IMR-90 (cell line): ENCODE measurements at regions of chr14 and their contacts with region 1.

Region 1: DNA sequence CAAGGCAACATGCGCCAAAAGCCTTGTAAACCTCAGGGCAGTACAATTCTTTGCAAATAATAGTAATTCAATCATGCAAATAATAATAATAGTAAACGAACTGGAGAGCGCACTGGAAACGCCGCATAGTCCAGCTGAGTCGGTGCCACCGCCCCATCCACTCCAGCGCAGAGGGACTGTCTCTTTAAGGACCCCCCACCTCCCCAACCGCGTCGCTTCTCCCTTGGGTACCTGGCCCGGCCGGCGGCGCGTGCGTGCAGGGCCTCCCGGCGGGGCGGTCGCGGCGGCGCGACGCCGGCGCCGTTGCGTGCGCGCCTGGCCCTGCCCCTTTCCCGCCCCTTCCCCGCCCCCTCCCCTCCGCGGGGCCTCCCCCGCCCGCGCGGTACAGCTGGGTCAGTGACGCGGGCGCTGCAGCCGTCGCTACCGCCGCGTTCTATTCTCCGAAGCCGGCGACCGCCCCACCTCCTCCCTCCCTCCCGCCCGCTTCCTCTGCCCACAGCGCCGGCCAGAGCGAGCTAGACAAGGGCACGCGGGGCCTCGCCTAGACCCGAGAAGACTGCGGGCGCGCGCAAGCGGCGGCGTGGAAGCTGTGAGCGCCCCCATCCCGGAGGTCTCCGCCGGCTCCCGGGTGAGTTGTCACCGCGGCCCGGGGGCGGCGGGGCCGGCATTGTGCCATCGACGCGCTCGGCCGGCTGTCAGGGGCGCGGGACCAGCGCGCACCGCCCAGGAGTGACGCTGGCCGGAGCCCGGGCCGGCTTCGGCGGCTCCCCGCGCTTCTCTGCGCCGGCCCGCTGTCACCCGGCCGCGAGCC is at the start of gene SUSD6:
- DNase-seq: peak; percentile 85
- ATAC-seq: peak; percentile 85
- H3K4me3 ChIP-seq: peak within 1 kb of the TSS; percentile 80
- H3K27ac ChIP-seq: peak within 1 kb of the TSS; percentile 85
- H3K4me1 ChIP-seq: peaks cover 20% of the 10 kb centered on the region
- H3K27me3 ChIP-seq: no peaks in the 10 kb centered on the region
- CTCF ChIP-seq: no peak
- POLR2A ChIP-seq: peak; percentile 86
- RAD21 ChIP-seq: no peak
- total RNA-seq, gene SUSD6: 2.3 and 2.5 TPM in 2 replicates

Region 2: DNA sequence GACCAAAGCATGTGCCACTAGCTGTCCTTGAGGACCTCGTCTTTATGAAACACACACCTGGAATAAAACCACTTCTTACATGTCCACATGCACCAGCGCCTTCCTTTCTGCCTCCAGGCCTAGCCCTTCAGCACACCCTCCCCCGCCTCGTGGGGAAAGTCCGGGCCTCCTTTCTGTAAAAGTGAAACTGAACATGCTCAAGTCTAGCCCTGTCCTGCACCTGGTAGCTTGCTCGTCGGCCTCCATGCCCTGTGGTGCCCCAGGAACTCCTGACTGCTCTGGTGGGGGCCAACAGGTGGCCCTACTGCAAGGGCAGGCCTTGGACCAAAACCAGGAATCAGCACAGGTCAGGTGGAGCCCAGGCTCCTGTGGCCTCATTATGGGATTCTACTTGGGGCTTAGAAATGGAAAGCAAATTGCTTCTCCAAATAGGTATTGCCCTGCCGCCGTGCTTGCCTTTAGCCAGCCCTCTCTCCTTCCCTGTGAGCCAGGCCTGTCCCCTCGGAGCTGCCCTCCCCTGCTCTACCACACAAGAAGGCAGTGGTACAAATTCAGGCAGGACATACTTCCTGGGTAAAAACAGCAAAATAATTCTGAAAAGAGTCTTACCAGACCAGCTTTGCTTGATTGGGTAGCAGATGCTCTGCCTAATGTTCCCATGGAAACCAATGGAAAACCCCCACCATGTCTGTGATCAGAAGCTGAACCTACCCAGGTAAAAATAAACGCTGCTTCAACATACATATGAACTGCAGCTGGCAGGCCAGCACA is 256.8 kb before region 1 on chr14:
- CTCF ChIA-PET with region 1: no interaction called
- POLR2A ChIA-PET with region 1: no interaction called
- dilution Hi-C with region 1: no loop called
- in situ Hi-C with region 1: no loop called
- intact Hi-C with region 1: no loop called
- DNase-seq: peak; percentile 5
- ATAC-seq: no peak
- H3K4me3 ChIP-seq: no peak overlapping the region
- H3K27ac ChIP-seq: no peak overlapping the region
- H3K4me1 ChIP-seq: peaks cover 7% of the 10 kb centered on the region
- H3K27me3 ChIP-seq: peaks cover 19% of the 10 kb centered on the region
- CTCF ChIP-seq: no peak
- POLR2A ChIP-seq: no peak
- RAD21 ChIP-seq: no peak

Region 3: GRCh38 chr14:69580009-69580577 is 31.3 kb before region 1 on chr14:
- CTCF ChIA-PET with region 1: interaction called, 15 read pairs
- POLR2A ChIA-PET with region 1: no interaction called
- dilution Hi-C with region 1: no loop called
- in situ Hi-C with region 1: no loop called
- intact Hi-C with region 1: no loop called
- DNase-seq: peak; percentile 96
- ATAC-seq: peak; percentile 87
- H3K4me3 ChIP-seq: no peak overlapping the region
- H3K27ac ChIP-seq: no peak overlapping the region
- H3K4me1 ChIP-seq: no peaks in the 10 kb centered on the region
- H3K27me3 ChIP-seq: peaks cover 18% of the 10 kb centered on the region
- CTCF ChIP-seq: peak; percentile 76
- POLR2A ChIP-seq: no peak
- RAD21 ChIP-seq: peak; percentile 58

Region 4: GRCh38 chr14:69629225-69630127 is 18.1 kb after region 1 on chr14:
- CTCF ChIA-PET with region 1: no interaction called
- POLR2A ChIA-PET with region 1: interaction called, 3 read pairs
- dilution Hi-C with region 1: no loop called
- in situ Hi-C with region 1: no loop called
- intact Hi-C with region 1: loop called (anchors 2 kb)
- DNase-seq: peak; percentile 50
- ATAC-seq: peak; percentile 18
- H3K4me3 ChIP-seq: no peak overlapping the region
- H3K27ac ChIP-seq: peak overlapping the region; percentile 39
- H3K4me1 ChIP-seq: peaks cover 45% of the 10 kb centered on the region
- H3K27me3 ChIP-seq: no peaks in the 10 kb centered on the region
- CTCF ChIP-seq: no peak
- POLR2A ChIP-seq: no peak
- RAD21 ChIP-seq: no peak

Region 5: GRCh38 chr14:69648477-69649451 is 37.4 kb after region 1 on chr14:
- CTCF ChIA-PET with region 1: interaction called, 4 read pairs
- POLR2A ChIA-PET with region 1: no interaction called
- dilution Hi-C with region 1: no loop called
- in situ Hi-C with region 1: no loop called
- intact Hi-C with region 1: loop called (anchors 5 kb)
- DNase-seq: peak; percentile 93
- ATAC-seq: peak; percentile 89
- H3K4me3 ChIP-seq: no peak overlapping the region
- H3K27ac ChIP-seq: peak overlapping the region; percentile 50; the same call in 1 of the 2 replicates
- H3K4me1 ChIP-seq: peaks cover 36% of the 10 kb centered on the region
- H3K27me3 ChIP-seq: no peaks in the 10 kb centered on the region
- CTCF ChIP-seq: no peak
- POLR2A ChIP-seq: no peak
- RAD21 ChIP-seq: 0 out of 2 replicates have a peak, but pooled peaks have one; percentile 7

Region 6: GRCh38 chr14:69715725-69716477 is 104.5 kb after region 1 on chr14:
- CTCF ChIA-PET with region 1: interaction called, 3 read pairs
- POLR2A ChIA-PET with region 1: interaction called, 6 read pairs
- dilution Hi-C with region 1: no loop called
- in situ Hi-C with region 1: loop called (anchors 5 kb)
- intact Hi-C with region 1: loop called (anchors 2 kb)
- DNase-seq: peak; percentile 70
- ATAC-seq: peak; percentile 6
- H3K4me3 ChIP-seq: no peak overlapping the region
- H3K27ac ChIP-seq: peak overlapping the region; percentile 32
- H3K4me1 ChIP-seq: peaks cover 37% of the 10 kb centered on the region
- H3K27me3 ChIP-seq: no peaks in the 10 kb centered on the region
- CTCF ChIP-seq: no peak
- POLR2A ChIP-seq: no peak
- RAD21 ChIP-seq: no peak

Region 7: DNA sequence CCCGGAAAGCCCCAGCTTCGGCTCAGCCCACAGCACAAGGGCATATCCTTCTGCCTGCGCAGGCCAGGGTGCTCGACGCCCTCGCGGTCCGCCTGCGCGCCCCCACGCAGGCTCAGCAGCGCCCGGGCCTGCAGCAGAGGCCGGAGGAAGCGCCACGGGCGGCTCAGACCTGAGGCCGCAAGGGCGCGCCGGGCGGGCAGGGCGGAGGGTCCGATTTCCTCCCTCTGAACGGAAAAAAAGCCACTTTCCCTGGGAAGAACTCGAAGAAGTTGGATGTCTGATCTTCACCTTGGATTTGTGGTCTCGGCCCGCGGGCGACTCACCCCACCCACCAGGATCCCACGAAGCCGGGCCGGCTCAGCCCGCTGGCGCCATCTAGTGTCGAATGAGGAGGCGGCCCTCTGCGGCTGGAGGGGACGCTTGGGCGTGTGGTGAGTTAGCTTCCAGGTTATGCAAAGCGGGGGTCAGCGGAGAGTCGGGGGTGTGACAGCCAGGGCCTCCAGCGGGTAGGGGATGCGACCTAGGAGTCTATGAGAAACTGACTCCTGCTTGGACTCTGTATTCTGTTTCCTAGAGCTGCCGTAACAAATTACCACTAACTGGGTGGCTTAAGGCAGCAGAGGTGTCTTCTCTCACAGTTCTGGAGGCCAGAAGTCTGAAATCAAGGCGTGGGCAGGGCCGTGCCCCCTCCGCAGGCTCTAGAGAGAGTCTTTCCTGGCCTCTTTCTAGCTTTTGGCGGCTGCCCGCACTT is 115.5 kb after region 1 on chr14:
- CTCF ChIA-PET with region 1: interaction called, 12 read pairs
- POLR2A ChIA-PET with region 1: no interaction called
- dilution Hi-C with region 1: no loop called
- in situ Hi-C with region 1: no loop called
- intact Hi-C with region 1: no loop called
- DNase-seq: peak; percentile 58
- ATAC-seq: peak; percentile 97
- H3K4me3 ChIP-seq: peak overlapping the region; percentile 57
- H3K27ac ChIP-seq: peak overlapping the region; percentile 46
- H3K4me1 ChIP-seq: peaks cover 2% of the 10 kb centered on the region
- H3K27me3 ChIP-seq: no peaks in the 10 kb centered on the region
- CTCF ChIP-seq: peak; percentile 92
- POLR2A ChIP-seq: peak; percentile 67
- RAD21 ChIP-seq: peak; percentile 97